Activated CD4-positive, alpha-beta T cell treated with anti-CD3 and anti-CD28 coated beads, Interleukin-2, amount 10 ng/mL, durations not matched to agents 24 days and 14 days (primary cell): ENCODE measurements at regions of chr20 and their contacts with region 1.

Region 1: DNA sequence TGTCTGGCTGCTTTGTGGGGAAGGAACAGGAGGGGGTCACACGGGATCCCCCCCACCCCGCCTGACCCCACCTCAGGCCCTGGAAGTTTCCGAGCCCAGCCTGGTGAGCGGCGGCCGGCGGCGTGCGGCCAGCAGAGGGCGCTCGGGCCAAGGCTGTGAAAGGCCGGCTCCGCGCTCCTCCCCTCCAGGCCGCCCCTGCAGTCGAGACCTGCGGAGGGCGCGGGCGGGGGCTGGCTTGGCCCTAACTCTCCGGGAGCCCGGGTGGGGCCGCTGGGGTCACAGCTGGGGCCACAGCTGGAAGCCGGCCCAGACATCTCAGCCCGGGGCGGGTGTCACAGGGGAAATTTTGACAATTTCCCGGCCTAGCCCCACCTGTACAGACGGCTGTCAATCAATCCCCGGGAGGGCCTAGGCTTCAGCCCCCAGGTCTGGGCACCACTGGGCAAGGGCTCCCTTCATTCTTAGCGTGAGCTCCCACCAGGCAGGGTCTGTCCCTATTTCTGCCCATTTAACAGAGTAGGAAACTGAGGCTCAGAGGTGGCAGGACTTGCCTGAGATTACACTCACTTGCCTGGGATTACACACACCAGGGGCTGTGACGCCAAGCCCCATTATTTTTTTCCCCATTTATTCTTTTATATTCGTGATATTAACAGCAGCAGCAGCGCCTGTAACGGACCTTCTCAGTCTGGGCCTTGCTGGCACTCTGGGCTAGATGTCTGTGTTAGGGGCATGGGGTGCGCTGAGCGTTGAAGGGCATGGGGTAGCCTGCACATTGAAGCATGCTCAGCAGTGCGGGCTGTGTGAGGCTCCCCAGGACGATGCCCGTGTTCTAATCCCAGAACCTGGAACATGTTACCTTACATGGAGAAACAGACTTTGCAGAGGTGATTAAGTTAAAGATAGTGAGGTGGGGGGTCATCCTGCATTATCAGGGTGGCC is 23.0 kb downstream of the ZBP1 start:
- DNase-seq: peak; percentile 92
- H3K4me3 Mint-ChIP-seq: no peak overlapping the region
- H3K27ac Mint-ChIP-seq: peak overlapping the region; percentile 20
- H3K4me1 Mint-ChIP-seq: peaks cover 10% of the 10 kb centered on the region
- H3K27me3 Mint-ChIP-seq: peaks cover 34% of the 10 kb centered on the region

Region 2: GRCh38 chr20:57498425-57499400 is 98.6 kb before region 1 on chr20:
- intact Hi-C with region 1: loop called (anchors 5 kb)
- DNase-seq: peak; percentile 66
- H3K4me3 Mint-ChIP-seq: no peak overlapping the region
- H3K27ac Mint-ChIP-seq: no peak overlapping the region
- H3K4me1 Mint-ChIP-seq: peaks cover 11% of the 10 kb centered on the region
- H3K27me3 Mint-ChIP-seq: peaks cover 51% of the 10 kb centered on the region

Region 3: DNA sequence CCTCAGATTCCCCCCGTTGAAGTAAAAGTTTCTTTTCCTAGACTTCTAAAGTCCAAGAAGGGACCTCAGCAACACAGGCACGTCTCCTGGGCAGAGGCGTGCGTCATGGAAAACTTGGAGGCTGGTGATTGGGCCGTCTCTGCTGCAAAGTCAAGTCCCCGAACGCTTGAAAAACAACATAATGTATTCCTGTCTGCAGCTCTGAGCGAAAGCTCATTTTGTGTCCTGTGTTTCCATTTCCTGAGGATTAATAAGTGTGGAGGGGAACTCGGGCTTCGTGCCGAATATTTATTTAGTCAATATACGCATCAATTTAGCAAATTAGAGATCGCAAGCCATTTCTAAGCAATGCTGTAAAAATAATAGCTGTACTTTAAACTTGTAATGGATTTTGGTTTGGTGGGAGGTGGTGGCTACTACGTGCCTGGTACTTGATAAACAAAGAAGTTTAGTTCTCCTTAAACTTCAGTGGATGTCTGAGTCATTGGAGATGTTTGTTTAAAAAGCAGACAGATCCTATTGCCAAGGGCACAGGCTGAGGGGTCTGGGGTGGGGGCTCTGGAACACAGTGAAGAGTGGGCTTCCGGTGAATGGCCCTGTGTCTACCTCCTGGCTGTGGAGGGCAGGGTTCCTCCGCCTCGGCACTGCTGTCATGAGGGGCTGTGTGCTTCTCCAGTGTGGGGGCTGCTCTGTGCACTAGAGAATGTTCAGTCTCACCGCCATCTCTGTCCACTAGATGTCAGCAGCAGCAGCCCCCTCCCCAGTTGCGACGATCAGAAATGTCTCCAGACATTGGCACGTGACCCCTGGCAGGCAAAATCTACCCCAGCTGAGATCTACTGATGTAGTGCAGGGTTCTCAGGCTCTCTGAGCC is 14.6 kb before region 1 on chr20:
- intact Hi-C with region 1: no loop called
- DNase-seq: no peak
- H3K4me3 Mint-ChIP-seq: no peak overlapping the region
- H3K27ac Mint-ChIP-seq: no peak overlapping the region
- H3K4me1 Mint-ChIP-seq: no peaks in the 10 kb centered on the region
- H3K27me3 Mint-ChIP-seq: peaks cover 36% of the 10 kb centered on the region

Region 4: DNA sequence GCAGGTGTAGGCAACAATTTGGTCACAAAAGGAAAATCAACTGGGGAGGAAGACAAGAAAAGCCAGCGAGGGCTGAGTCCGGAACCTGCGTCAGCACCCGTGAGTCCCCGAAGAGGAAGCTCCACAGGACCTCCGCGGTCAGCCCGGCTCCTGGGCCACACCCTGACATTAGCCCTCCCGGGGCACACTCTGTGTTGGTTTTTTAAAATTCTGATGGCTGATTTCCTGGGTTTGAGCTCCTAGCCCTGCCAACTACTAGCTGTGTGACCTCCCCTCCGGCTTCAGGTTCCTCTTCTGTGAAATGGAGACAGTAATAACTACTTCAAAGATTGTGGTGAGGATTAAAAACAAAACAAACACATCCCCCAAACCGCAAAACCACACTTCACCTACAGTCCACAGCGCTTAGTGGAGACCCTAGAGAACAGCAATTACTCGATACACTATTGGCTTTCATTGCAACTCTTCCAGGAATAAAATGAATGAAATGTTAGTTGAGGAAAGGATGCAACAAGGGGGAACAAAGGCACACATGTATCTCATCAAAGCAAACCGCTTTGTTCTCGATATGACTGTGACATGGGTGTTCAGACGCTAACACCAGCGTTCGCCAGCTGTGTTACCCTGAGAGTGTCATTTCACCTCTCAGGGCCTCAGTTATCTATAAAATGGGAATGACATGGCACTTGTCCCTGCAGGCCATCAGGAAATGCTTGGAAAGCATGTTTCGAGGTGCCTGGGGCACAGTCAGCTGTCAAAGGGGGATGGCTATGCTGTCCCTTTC is 22.0 kb after region 1 on chr20:
- intact Hi-C with region 1: loop called (anchors 2 kb)
- DNase-seq: peak; percentile 92
- H3K4me3 Mint-ChIP-seq: peak overlapping the region; percentile 78
- H3K27ac Mint-ChIP-seq: peak overlapping the region; percentile 87
- H3K4me1 Mint-ChIP-seq: peaks cover 54% of the 10 kb centered on the region
- H3K27me3 Mint-ChIP-seq: peaks cover 16% of the 10 kb centered on the region

Region 5: GRCh38 chr20:57693002-57693640 is 95.9 kb after region 1 on chr20:
- intact Hi-C with region 1: no loop called
- DNase-seq: no peak
- H3K4me3 Mint-ChIP-seq: no peak overlapping the region
- H3K27ac Mint-ChIP-seq: no peak overlapping the region
- H3K4me1 Mint-ChIP-seq: peaks cover 2% of the 10 kb centered on the region
- H3K27me3 Mint-ChIP-seq: peaks cover 5% of the 10 kb centered on the region

Region 6: GRCh38 chr20:58087193-58087858 is 490.1 kb after region 1 on chr20:
- intact Hi-C with region 1: loop called (anchors 5 kb)
- DNase-seq: peak; percentile 61
- H3K4me3 Mint-ChIP-seq: no peak overlapping the region
- H3K27ac Mint-ChIP-seq: no peak overlapping the region
- H3K4me1 Mint-ChIP-seq: no peaks in the 10 kb centered on the region
- H3K27me3 Mint-ChIP-seq: no peaks in the 10 kb centered on the region

Region 7: DNA sequence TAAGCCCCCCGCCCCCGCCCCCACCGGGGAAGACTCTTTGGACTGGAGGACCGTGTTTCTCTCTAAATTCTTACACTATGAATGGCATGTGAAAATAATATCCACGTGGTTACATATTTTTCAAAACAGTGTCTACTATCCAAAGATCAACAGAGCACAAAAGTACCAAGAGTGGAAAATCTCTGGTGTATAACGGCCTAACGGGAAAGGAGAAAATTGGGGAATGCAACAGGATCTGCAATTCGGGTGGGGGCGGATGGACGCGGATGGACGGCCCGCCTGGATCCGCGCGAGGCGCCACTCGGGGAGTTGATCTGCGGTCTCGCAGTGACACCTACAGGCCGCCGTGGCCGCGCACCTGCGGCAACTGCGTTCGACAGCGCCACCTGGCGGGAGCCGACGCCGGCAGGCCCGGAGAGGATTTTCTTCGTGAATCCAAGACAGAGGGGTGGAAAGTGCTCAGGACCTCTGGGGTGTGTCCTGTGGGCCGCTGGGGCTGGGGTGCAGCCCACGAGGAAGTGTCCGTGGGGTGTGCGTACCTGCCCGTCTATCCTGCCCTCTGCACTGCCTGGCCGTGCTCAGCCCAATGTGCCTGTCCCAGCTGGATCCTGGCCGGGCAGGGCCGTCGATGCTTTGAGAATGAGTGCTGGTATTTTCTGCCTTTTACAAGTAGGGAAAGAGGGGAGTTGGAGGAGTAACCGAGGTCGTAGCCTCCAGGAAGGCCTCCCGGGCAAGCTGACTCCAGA is 612.6 kb after region 1 on chr20:
- intact Hi-C with region 1: loop called (anchors 1 kb)
- DNase-seq: peak; percentile 96
- H3K4me3 Mint-ChIP-seq: no peak overlapping the region
- H3K27ac Mint-ChIP-seq: peak overlapping the region; percentile 39
- H3K4me1 Mint-ChIP-seq: peaks cover 8% of the 10 kb centered on the region
- H3K27me3 Mint-ChIP-seq: peaks cover 23% of the 10 kb centered on the region